Heart right ventricle (tissue), 16 donors: ENCODE measurements at regions of chr9 and their contacts with region 1.

Region 1: DNA sequence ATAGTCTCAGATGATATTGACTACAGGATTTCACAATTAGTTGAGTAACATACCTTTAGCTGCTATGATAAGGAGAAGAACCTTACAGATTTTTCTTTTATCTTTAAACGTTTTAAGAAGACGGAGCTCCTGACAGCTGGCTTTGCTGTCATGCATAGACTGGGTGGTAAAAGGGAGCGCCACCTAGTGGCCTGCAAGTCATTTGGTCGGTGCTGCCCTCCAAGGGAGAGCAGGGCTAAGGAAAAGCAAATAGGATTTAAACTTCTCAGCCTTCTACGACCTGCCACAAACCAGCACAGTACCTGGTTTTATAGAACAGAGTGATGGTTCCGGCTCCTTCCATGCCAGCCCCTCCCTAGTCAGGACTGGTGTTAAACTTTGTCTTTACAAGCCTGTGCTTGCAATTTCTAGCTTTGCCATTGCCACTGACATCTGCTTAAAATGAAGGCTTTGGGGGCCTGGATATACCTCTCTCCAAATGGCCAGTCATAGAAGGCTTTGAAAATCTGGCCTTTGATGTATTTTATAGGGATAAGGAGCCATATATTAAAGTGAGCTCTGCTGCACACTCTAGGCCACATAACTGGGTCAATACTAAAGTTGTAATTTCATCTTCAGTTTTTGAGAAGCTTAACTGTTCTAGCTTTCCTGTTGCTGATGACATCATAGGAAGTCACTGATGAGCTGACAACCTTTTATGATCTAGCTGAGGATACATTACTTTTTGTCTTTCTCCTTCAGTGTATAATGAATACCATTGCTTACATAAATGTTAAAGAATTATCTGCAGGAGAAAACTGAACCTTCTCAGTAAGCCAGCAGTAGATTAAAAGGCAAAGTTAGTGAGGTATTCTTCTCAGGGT is 31.1 kb upstream of the ADAMTSL1 start:
- DNase-seq: peak; percentile 58 to 74
- ATAC-seq: peak; percentile 76 to 86 (median 80)
- H3K4me3 ChIP-seq: no peak overlapping the region
- H3K27ac ChIP-seq: no peak overlapping the region
- H3K4me1 ChIP-seq: peaks cover 0 to 32% (median 12%) of the 10 kb centered on the region in 9 donors
- H3K27me3 ChIP-seq: no peaks in the 10 kb centered on the region
- CTCF ChIP-seq: peak; percentile 72 to 97 (median 92)

Region 2: DNA sequence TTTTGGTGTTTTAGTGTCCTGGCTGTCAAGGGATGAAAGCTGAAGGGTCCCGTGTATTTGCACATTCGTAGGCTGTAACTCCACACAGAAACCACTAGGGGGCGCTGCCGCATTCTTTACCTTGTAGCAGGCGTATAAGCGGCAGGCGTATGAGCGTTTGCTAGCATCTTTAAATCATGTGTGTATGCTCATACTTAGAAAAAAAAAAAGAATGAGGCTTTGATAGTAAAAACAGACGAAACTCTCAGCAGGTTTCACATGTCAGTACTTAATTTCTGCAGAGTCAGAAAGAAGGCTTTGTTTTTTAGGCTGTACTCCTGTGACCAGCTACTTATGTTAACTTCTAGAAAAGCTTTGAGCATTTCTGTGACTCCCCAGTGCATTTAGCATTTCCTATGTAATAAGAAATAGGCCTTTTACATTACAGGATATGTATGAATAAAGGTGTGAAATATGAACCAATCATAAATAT is 187.7 kb before region 1 on chr9:
- intact Hi-C with region 1: loop called (anchors 1 to 5 kb)
- DNase-seq: peak; percentile 70 to 83
- ATAC-seq: peak; percentile 47 to 91 (median 84)
- H3K4me3 ChIP-seq: no peak overlapping the region
- H3K27ac ChIP-seq: no peak overlapping the region
- H3K4me1 ChIP-seq: peaks cover 0 to 21% (median 4%) of the 10 kb centered on the region in 9 donors
- H3K27me3 ChIP-seq: no peaks in the 10 kb centered on the region
- CTCF ChIP-seq: peak; percentile 88 to 98 (median 97)

Region 3: GRCh38 chr9:18362901-18363685 is 79.8 kb before region 1 on chr9:
- intact Hi-C with region 1: loop called in 3 of 10 experiments (anchors 2 to 10 kb)
- DNase-seq: peak in 1 of 2 donors; percentile 41
- ATAC-seq: peak; percentile 81 to 98 (median 92)
- H3K4me3 ChIP-seq: no peak overlapping the region
- H3K27ac ChIP-seq: peak overlapping the region in 9 of 10 donors; percentile 11 to 69 (median 57)
- H3K4me1 ChIP-seq: peaks cover 0 to 29% (median 22%) of the 10 kb centered on the region in 9 donors
- H3K27me3 ChIP-seq: no peaks in the 10 kb centered on the region
- CTCF ChIP-seq: no peak

Region 4: DNA sequence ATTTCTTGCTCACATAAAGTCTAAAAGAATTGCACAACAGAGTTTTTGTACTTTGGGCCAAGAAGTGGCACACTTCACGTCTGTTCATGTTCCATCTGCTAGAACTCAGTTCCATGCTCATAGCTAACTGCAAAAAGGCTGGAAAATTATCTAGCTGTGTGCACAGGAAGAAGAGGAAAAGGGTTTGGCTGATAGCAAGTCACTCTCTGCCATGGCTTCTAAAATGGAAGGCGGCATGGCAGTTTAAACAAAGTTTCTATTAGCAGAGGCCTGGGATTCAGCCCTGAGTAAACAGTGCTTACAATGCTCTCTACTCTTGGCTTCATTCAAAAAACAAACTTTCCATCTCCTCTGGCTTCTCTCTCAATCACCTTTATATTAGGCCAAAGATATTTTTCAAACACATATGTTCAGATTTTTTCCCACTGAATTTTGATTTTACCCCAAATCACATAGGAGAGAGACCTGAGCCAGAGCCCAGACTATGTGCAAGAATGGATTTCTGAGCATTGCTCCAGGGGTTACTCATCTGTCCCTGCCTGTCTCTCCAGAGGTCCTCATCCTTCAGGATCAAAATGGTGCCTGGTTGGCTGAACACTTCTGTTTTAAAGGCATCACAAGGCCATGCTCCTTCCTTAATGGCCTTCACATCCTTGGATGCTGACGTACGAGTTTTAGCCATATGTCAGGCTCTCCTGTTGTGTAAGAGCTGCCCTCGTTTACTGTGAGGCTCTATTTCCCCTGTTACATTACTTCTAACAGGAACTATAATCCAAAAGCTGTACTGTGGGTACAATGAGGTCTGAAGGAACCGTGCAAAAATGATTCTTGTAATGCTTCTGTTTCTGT is 363.6 kb after region 1 on chr9:
- intact Hi-C with region 1: loop called in 1 of 10 experiments (anchors 10 kb)
- DNase-seq: no peak
- ATAC-seq: no peak
- H3K4me3 ChIP-seq: no peak overlapping the region
- H3K27ac ChIP-seq: no peak overlapping the region
- H3K4me1 ChIP-seq: no peaks in the 10 kb centered on the region
- H3K27me3 ChIP-seq: no peaks in the 10 kb centered on the region
- CTCF ChIP-seq: no peak

Region 5: DNA sequence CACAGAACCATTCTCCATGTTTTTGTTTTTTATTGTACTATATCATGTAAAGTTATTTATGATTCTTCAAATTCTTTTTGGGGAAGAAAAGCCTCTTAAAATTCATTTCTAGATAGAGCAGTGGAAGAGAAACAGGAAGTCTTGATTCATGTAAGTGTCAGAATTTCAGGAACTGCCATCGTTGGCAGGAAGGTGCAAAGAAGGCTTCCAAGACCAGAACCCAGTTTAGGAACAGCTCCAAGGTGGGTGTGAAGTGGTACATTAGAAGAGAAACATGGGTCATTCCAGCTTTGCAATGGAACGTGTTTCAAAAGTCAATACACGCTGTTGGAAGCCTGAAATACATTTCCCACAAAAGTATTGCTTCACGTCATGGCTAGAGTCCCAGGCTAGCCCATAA is 575.3 kb after region 1 on chr9:
- intact Hi-C with region 1: loop called in 3 of 10 experiments (anchors 5 to 10 kb)
- DNase-seq: no peak
- ATAC-seq: no peak
- H3K4me3 ChIP-seq: no peak overlapping the region
- H3K27ac ChIP-seq: no peak overlapping the region
- H3K4me1 ChIP-seq: peaks cover 0 to 3% (median under 1%) of the 10 kb centered on the region in 9 donors
- H3K27me3 ChIP-seq: no peaks in the 10 kb centered on the region
- CTCF ChIP-seq: no peak

Region 6: DNA sequence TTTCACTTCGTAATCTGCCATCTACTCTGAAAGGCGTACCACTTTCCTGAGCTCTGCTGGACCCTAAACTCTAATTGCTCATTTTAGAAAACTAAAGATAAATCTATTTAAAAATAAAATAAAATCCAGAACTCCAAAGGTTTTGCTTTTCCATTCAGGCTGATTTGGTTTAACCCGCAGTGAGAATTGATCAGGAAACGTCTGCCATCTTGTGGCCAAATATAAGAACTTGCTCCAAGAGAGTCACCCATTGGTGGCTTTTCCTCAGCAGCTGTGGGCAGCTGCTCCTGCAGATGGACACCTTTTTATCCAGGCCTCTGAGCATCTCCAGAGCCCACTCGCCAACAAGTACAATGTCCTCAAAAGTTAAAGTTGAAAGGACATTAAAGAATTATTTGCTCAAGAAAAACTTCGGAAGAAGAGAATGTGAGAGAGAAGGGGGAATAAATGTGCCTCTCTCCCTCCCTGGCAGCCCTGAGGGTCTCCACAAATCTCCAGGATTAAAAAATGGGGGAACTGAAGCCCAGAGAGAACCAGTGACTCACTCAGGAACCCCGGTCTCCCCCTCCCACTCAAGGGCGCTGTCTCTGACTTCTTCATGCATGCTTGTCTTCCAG is 586.1 kb after region 1 on chr9:
- intact Hi-C with region 1: loop called in 6 of 10 experiments (anchors 5 to 10 kb)
- DNase-seq: peak in 1 of 2 donors; percentile 60
- ATAC-seq: peak in 6 of 8 donors; percentile 65 to 81 (median 74)
- H3K4me3 ChIP-seq: no peak overlapping the region
- H3K27ac ChIP-seq: no peak overlapping the region
- H3K4me1 ChIP-seq: peaks cover 0 to 12% (median 0%) of the 10 kb centered on the region in 9 donors
- H3K27me3 ChIP-seq: peaks cover 0 to 5% (median 0%) of the 10 kb centered on the region in 7 donors
- CTCF ChIP-seq: peak; percentile 60 to 86 (median 78)